ENCODE measurements at regions of chr7 and their contacts with region 1.

Region 1: GRCh38 chr7:35801392-35802101 is 690 bp downstream of the SEPTIN7 start:
- DNase-seq: peak; percentile 79
- ATAC-seq: peak; percentile 33
- H3K4me3 Mint-ChIP-seq: peak overlapping the region; percentile 98
- H3K27ac Mint-ChIP-seq: peak overlapping the region; percentile 99
- H3K4me1 Mint-ChIP-seq: peaks cover 41% of the 10 kb centered on the region
- H3K27me3 Mint-ChIP-seq: no peaks in the 10 kb centered on the region
- CTCF ChIP-seq: peak; percentile 27

Region 2: DNA sequence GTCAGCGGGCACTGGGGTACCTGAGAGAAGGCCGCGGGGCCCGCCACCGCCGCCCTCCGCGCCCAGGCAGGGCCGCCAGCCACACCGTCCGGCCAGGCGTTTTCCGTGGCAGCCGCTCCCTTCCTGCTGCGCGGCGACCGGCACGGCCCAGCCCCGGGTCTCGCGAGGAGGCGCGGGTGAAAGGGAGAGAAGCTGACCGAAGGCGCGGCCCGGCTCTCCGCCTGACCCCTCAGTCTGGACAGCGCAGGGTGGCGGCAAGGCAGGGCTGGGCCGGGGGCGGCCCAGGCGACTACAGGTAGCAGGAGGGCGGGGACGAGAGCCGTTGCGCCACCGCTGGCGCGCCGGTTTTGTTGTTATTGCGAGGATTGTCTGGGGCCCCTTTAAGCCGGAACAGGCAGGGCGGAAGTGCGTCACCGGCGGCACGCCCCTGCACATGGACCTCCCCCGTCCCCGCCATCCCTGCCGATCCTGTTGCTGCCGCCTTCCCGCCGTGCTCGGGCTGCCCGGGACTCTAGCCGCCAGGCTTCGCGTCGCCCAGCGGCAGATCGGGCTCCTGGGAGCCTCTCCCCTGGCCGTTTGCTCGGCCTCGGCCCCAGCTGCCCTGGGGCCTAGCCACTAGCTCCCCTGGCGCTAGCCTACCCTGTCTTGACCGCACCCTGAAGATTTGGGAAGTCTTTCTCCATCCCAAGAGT is 106.6 kb before region 1 on chr7 and contains the start of gene HERPUD2:
- CTCF ChIA-PET with region 1: interaction called, 6 read pairs
- POLR2A ChIA-PET with region 1: interaction called, 65 read pairs
- intact Hi-C with region 1: loop called (anchors 5 kb)
- DNase-seq: peak; percentile 95
- ATAC-seq: peak; percentile 83
- H3K4me3 Mint-ChIP-seq: peak within 1 kb of the TSS; percentile 89
- H3K27ac Mint-ChIP-seq: peak within 1 kb of the TSS; percentile 97
- H3K4me1 Mint-ChIP-seq: peaks cover 34% of the 10 kb centered on the region
- H3K27me3 Mint-ChIP-seq: no peaks in the 10 kb centered on the region
- CTCF ChIP-seq: no peak
- total RNA-seq, gene HERPUD2: 24.9 to 25.0 TPM

Region 3: GRCh38 chr7:35723011-35723410 is 78.5 kb before region 1 on chr7:
- CTCF ChIA-PET with region 1: interaction called, 7 read pairs
- POLR2A ChIA-PET with region 1: interaction called, 21 read pairs
- intact Hi-C with region 1: loop called (anchors 5 kb)
- DNase-seq: peak; percentile 28
- ATAC-seq: peak; percentile 66
- H3K4me3 Mint-ChIP-seq: no peak overlapping the region
- H3K27ac Mint-ChIP-seq: peak overlapping the region; percentile 84
- H3K4me1 Mint-ChIP-seq: peaks cover 64% of the 10 kb centered on the region
- H3K27me3 Mint-ChIP-seq: no peaks in the 10 kb centered on the region
- CTCF ChIP-seq: peak; percentile 12

Region 4: GRCh38 chr7:35736725-35737124 is 64.8 kb before region 1 on chr7:
- CTCF ChIA-PET with region 1: no interaction called
- POLR2A ChIA-PET with region 1: interaction called, 11 read pairs
- intact Hi-C with region 1: no loop called
- DNase-seq: no peak
- ATAC-seq: no peak
- H3K4me3 Mint-ChIP-seq: no peak overlapping the region
- H3K27ac Mint-ChIP-seq: no peak overlapping the region
- H3K4me1 Mint-ChIP-seq: peaks cover 6% of the 10 kb centered on the region
- H3K27me3 Mint-ChIP-seq: no peaks in the 10 kb centered on the region
- CTCF ChIP-seq: no peak

Region 5: GRCh38 chr7:35906191-35906908 is 104.8 kb after region 1 on chr7:
- CTCF ChIA-PET with region 1: interaction called, 7 read pairs
- POLR2A ChIA-PET with region 1: no interaction called
- intact Hi-C with region 1: loop called (anchors 5 kb)
- DNase-seq: peak; percentile 75
- ATAC-seq: peak; percentile 87
- H3K4me3 Mint-ChIP-seq: no peak overlapping the region
- H3K27ac Mint-ChIP-seq: peak overlapping the region; percentile 49
- H3K4me1 Mint-ChIP-seq: peaks cover 9% of the 10 kb centered on the region
- H3K27me3 Mint-ChIP-seq: no peaks in the 10 kb centered on the region
- CTCF ChIP-seq: peak; percentile 92

Region 6: GRCh38 chr7:35993676-35994606 is 192.4 kb after region 1 on chr7:
- CTCF ChIA-PET with region 1: no interaction called
- POLR2A ChIA-PET with region 1: no interaction called
- intact Hi-C with region 1: no loop called
- DNase-seq: no peak
- ATAC-seq: no peak
- H3K4me3 Mint-ChIP-seq: no peak overlapping the region
- H3K27ac Mint-ChIP-seq: no peak overlapping the region
- H3K4me1 Mint-ChIP-seq: peaks cover 8% of the 10 kb centered on the region
- H3K27me3 Mint-ChIP-seq: no peaks in the 10 kb centered on the region
- CTCF ChIP-seq: no peak